ENCODE measurements at regions of chr17 and their contacts with region 1.

Region 1: GRCh38 chr17:50139950-50140871 is 10.3 kb upstream of the SAMD14 start:
- DNase-seq: peak; percentile 88
- ATAC-seq: peak; percentile 88
- H3K4me3 Mint-ChIP-seq: peak overlapping the region; percentile 12
- H3K27ac Mint-ChIP-seq: peak overlapping the region; percentile 79
- H3K4me1 Mint-ChIP-seq: peaks cover 49% of the 10 kb centered on the region
- H3K27me3 Mint-ChIP-seq: no peaks in the 10 kb centered on the region

Region 2: GRCh38 chr17:50129728-50130558 is 10.3 kb before region 1 on chr17 and contains the start of gene SAMD14:
- CTCF ChIA-PET with region 1: interaction called, 18 read pairs
- DNase-seq: peak; percentile 61
- ATAC-seq: peak; percentile 73
- H3K4me3 Mint-ChIP-seq: peak within 1 kb of the TSS; percentile 58
- H3K27ac Mint-ChIP-seq: no peak within 1 kb of the TSS
- H3K4me1 Mint-ChIP-seq: peaks cover 32% of the 10 kb centered on the region
- H3K27me3 Mint-ChIP-seq: peaks cover 32% of the 10 kb centered on the region
- total RNA-seq, gene SAMD14: 0.35 to 1.1 TPM

Region 3: GRCh38 chr17:50151041-50151936 is 11.1 kb after region 1 on chr17:
- CTCF ChIA-PET with region 1: interaction called, 55 read pairs
- DNase-seq: peak; percentile 96
- ATAC-seq: peak; percentile 81
- H3K4me3 Mint-ChIP-seq: peak overlapping the region; percentile 80
- H3K27ac Mint-ChIP-seq: peak overlapping the region; percentile 96
- H3K4me1 Mint-ChIP-seq: peaks cover 43% of the 10 kb centered on the region
- H3K27me3 Mint-ChIP-seq: no peaks in the 10 kb centered on the region

Region 4: DNA sequence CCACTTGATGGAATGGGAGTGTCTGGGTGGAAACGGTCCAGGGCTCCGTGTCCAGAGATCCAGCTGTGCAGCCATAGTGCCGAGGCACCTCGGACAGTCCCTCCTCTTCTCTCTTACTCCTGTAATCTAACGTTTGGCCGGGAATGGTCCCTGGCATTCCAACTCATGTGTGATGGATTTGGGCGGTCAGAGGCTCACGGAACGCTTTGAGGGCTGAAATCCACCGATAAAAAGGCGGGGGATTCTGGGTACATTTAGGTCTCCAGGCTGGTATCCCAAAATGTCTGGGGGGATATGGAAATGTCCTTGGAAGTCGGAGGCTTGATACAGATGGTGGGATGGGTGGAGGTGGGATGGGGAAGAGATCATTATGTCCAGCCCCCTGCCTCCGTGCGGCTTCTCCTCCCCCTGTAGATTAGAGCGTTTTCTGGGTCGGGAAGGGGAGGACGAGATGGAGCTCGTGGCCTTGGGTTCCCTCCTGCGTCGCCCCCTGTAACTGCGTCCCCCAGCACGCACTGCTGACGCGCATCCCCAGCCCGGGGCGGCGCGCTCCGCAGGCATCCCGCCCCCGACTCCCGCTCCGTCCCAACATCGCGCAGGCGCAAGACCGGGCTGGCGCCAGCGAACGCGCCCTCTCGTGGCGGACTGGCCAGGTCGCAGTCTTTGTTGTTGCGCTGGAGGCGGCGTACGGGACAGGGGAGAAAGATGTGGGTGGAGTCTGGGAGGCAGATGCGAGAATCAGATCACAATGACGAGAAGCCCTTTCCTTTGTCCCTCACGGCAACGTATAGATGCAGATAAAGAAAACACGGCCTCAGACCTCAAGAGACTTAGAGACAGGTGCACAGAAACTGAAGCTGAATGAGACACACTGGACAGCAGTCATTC is 21.1 kb after region 1 on chr17:
- CTCF ChIA-PET with region 1: interaction called, 66 read pairs
- DNase-seq: peak; percentile 96
- ATAC-seq: peak; percentile 98
- H3K4me3 Mint-ChIP-seq: peak overlapping the region; percentile 77
- H3K27ac Mint-ChIP-seq: peak overlapping the region; percentile 67
- H3K4me1 Mint-ChIP-seq: peaks cover 28% of the 10 kb centered on the region
- H3K27me3 Mint-ChIP-seq: peaks cover 8% of the 10 kb centered on the region

Region 5: GRCh38 chr17:50169121-50169764 is 29.0 kb after region 1 on chr17:
- CTCF ChIA-PET with region 1: interaction called, 30 read pairs
- DNase-seq: peak; percentile 75
- ATAC-seq: peak; percentile 74
- H3K4me3 Mint-ChIP-seq: peak overlapping the region; percentile 11
- H3K27ac Mint-ChIP-seq: peak overlapping the region; percentile 47
- H3K4me1 Mint-ChIP-seq: peaks cover 22% of the 10 kb centered on the region
- H3K27me3 Mint-ChIP-seq: no peaks in the 10 kb centered on the region

Region 6: GRCh38 chr17:50213026-50214022 is 73.1 kb after region 1 on chr17:
- CTCF ChIA-PET with region 1: no interaction called
- DNase-seq: peak; percentile 73
- ATAC-seq: peak; percentile 88
- H3K4me3 Mint-ChIP-seq: no peak overlapping the region
- H3K27ac Mint-ChIP-seq: no peak overlapping the region
- H3K4me1 Mint-ChIP-seq: peaks cover 12% of the 10 kb centered on the region
- H3K27me3 Mint-ChIP-seq: peaks cover 63% of the 10 kb centered on the region

Region 7: DNA sequence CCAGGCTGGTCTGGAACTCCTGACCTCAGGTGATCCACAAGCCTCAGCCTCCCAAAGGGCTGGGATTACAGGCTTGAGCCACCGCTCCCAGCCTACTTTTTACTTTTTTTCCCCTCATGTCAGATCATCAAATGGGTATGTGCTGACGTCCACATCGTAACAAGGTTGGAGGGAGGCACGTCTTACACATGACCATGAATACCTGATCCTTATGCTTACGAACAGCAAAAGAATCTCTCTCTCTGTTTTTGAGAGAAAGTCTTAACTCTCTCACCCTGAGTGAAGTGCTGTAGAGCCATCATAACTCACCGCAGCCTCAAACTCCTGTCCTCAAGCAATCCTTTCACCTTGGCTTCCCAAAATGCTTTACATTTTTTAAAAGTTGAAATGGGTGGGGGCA is 104.6 kb after region 1 on chr17:
- CTCF ChIA-PET with region 1: no interaction called
- DNase-seq: no peak
- ATAC-seq: no peak
- H3K4me3 Mint-ChIP-seq: no peak overlapping the region
- H3K27ac Mint-ChIP-seq: no peak overlapping the region
- H3K4me1 Mint-ChIP-seq: no peaks in the 10 kb centered on the region
- H3K27me3 Mint-ChIP-seq: peaks cover 42% of the 10 kb centered on the region

Measured in activated CD8-positive, alpha-beta memory T cell treated with anti-CD3 and anti-CD28 coated beads, Interleukin-2, amount 10 ng/mL, durations not matched to agents 7 days and 5 days (primary cell).